H1 (cell line): ENCODE measurements at regions of chr4 and their contacts with region 1.

Region 1: DNA sequence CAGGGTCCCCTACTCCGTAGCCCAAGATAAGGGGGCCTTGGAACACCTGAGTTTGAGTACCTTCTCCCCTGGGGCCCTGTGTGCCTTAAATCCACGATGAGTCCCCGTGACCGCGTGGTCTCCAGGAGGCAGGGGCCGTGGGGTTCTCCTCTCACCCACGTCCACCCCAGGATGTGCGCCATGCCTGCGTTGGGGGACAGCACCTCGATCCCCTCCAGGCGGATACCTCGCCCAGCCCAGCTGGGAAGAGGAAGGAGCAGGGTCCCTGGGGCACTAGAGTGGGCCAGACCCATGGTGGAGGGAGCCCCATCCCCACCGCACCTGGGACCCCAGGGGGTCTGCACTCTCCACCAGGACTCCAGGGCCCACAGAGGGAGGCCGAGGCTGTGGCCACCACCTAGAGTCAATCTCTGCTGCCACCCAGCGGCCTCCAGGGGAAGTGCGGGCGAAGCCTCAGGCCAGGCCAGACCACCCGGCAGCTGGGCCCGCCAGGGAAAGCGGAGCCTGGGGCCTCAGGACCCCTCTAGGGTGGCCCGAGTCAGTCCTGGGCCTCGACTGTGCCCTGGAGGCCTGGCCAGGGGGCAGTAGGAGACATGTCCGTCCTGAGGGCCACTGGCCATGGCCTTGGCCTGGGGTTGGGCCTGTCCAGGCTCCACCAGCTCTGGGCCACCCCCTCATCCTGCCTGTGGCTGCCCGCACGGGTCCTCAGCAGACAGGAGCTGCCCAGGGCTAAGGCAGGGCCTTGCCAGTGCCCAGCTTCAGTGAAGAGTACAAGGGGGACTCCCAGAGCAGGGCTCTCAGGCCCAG is 55.0 kb downstream of the FAM53A start:
- DNase-seq: peak in 1 of 2 experiments; percentile 97
- H3K4me3 ChIP-seq: no peak overlapping the region
- H3K27ac ChIP-seq: no peak overlapping the region
- H3K4me1 ChIP-seq: no peaks in the 10 kb centered on the region
- H3K27me3 ChIP-seq: no peaks in the 10 kb centered on the region
- CTCF ChIP-seq: peak in 2 of 3 experiments; percentile 96; a peak in 3 of 4 replicates
- EP300 ChIP-seq: no peak
- POLR2A ChIP-seq: no peak
- RAD21 ChIP-seq: peak; percentile 93 to 96

Region 2: GRCh38 chr4:1542516-1543320 is 86.4 kb before region 1 on chr4:
- CTCF ChIA-PET with region 1: no interaction called
- POLR2A ChIA-PET with region 1: no interaction called
- DNase-seq: no peak
- H3K4me3 ChIP-seq: no peak overlapping the region
- H3K27ac ChIP-seq: no peak overlapping the region
- H3K4me1 ChIP-seq: no peaks in the 10 kb centered on the region; a peak in 2 of 7 replicates
- H3K27me3 ChIP-seq: no peaks in the 10 kb centered on the region
- CTCF ChIP-seq: no peak
- EP300 ChIP-seq: no peak
- POLR2A ChIP-seq: no peak
- RAD21 ChIP-seq: no peak

Region 3: GRCh38 chr4:1644891-1645657 is 16.0 kb after region 1 on chr4:
- CTCF ChIA-PET with region 1: interaction called, 23 read pairs
- POLR2A ChIA-PET with region 1: no interaction called
- DNase-seq: no peak
- H3K4me3 ChIP-seq: no peak overlapping the region
- H3K27ac ChIP-seq: no peak overlapping the region
- H3K4me1 ChIP-seq: peaks cover 0 to 7% (median 3%) of the 10 kb centered on the region in 4 experiments; a peak in 4 of 7 replicates
- H3K27me3 ChIP-seq: no peaks in the 10 kb centered on the region
- CTCF ChIP-seq: no peak
- EP300 ChIP-seq: no peak
- POLR2A ChIP-seq: no peak
- RAD21 ChIP-seq: no peak